ENCODE measurements at regions of chr4 and their contacts with region 1.

Region 1: GRCh38 chr4:78056265-78057129 is 626 bp upstream of the FRAS1 start:
- DNase-seq: no peak
- ATAC-seq: peak; percentile 82
- H3K4me3 ChIP-seq: peak overlapping the region; percentile 63
- H3K27ac ChIP-seq: no peak overlapping the region
- H3K4me1 ChIP-seq: peaks cover 12% of the 10 kb centered on the region; the same call in 1 of the 2 replicates
- H3K27me3 ChIP-seq: peaks cover 0 to 35% of the 10 kb centered on the region in 2 experiments; a peak in 3 of 4 replicates
- CTCF ChIP-seq: no peak
- EP300 ChIP-seq: no peak
- POLR2A ChIP-seq: no peak
- RAD21 ChIP-seq: no peak

Region 2: DNA sequence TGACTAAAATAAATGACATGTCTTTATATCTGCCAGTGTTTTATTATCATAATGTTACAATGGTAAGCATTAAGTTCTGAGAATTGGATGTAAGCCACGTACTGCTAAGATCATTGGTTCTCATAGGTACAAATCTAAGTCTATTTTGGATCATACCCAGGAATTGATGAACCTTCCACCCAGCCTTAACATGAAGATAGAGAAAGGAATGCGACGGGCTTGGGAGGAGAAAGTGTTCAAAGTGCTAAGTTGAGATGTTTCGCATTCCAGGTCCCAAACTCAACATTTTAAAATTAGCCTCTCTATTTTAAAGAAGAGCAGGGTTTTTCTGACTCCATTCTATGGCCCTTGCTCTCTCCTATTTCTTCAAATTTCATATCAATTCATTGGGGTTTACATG is 54.2 kb before region 1 on chr4:
- CTCF ChIA-PET with region 1: no interaction called
- POLR2A ChIA-PET with region 1: no interaction called
- RAD21 ChIA-PET with region 1: no interaction called
- SMC1A ChIA-PET with region 1: no interaction called
- in situ Hi-C with region 1: no loop called
- intact Hi-C with region 1: no loop called
- DNase-seq: no peak
- ATAC-seq: no peak
- H3K4me3 ChIP-seq: no peak overlapping the region
- H3K27ac ChIP-seq: no peak overlapping the region
- H3K4me1 ChIP-seq: no peaks in the 10 kb centered on the region
- H3K27me3 ChIP-seq: no peaks in the 10 kb centered on the region; a peak in 1 of 4 replicates
- CTCF ChIP-seq: no peak
- EP300 ChIP-seq: no peak
- POLR2A ChIP-seq: no peak
- RAD21 ChIP-seq: no peak

Region 3: DNA sequence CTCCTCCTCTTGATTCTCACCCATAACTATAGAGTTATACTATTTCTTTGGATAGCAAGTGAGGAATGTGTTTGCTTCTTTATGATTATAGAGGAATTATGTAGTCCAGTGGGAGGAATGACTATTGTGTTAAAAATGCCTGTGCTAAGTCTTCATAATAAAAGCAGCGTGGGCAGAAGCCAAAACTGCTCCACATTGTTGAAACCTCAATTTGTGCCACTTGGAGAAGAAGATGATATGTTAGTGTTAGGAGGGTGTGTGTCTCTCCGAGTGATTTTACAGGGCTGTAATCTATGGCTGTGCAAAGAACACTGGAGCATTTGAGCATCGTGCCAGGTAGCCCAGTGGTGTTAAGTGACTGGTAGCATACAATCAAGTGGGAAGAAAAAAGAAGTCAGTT is 74.9 kb after region 1 on chr4:
- CTCF ChIA-PET with region 1: interaction called, 12 read pairs
- POLR2A ChIA-PET with region 1: no interaction called
- RAD21 ChIA-PET with region 1: interaction called, 11 read pairs
- SMC1A ChIA-PET with region 1: interaction called, 8 read pairs
- in situ Hi-C with region 1: no loop called
- intact Hi-C with region 1: no loop called
- DNase-seq: no peak
- ATAC-seq: no peak
- H3K4me3 ChIP-seq: no peak overlapping the region
- H3K27ac ChIP-seq: no peak overlapping the region
- H3K4me1 ChIP-seq: no peaks in the 10 kb centered on the region
- H3K27me3 ChIP-seq: no peaks in the 10 kb centered on the region; a peak in 1 of 4 replicates
- CTCF ChIP-seq: no peak
- EP300 ChIP-seq: no peak
- POLR2A ChIP-seq: no peak
- RAD21 ChIP-seq: no peak

Region 4: GRCh38 chr4:78186597-78187543 is 130.4 kb after region 1 on chr4:
- CTCF ChIA-PET with region 1: interaction called, 20 read pairs
- POLR2A ChIA-PET with region 1: interaction called, 4 read pairs
- RAD21 ChIA-PET with region 1: interaction called, 30 read pairs
- SMC1A ChIA-PET with region 1: interaction called, 19 read pairs
- in situ Hi-C with region 1: no loop called
- intact Hi-C with region 1: no loop called
- DNase-seq: no peak
- ATAC-seq: peak; percentile 78
- H3K4me3 ChIP-seq: no peak overlapping the region
- H3K27ac ChIP-seq: no peak overlapping the region
- H3K4me1 ChIP-seq: no peaks in the 10 kb centered on the region
- H3K27me3 ChIP-seq: no peaks in the 10 kb centered on the region
- CTCF ChIP-seq: no peak
- EP300 ChIP-seq: no peak
- POLR2A ChIP-seq: no peak
- RAD21 ChIP-seq: no peak

Region 5: DNA sequence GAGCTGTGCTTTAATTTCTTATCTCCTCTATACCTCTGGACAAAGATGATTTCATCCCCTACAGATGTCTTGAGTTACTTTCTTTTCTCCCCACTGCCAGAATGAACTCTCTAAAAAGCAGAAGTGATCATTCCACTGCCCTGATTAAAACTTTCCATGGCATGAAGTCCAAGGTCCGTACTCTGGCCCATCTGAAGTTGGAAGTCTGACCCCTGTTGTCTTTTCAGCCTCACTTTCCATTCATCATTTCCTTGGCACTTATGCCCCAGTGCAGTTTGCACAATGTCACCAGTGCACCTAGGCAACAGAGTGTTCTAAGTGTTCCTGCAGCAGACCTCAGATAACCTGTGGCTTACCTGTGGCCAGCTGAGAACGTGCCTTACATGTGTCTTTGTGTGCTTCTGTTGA is 243.1 kb after region 1 on chr4:
- CTCF ChIA-PET with region 1: interaction called, 15 read pairs
- POLR2A ChIA-PET with region 1: no interaction called
- RAD21 ChIA-PET with region 1: interaction called, 13 read pairs
- SMC1A ChIA-PET with region 1: interaction called, 30 read pairs
- in situ Hi-C with region 1: no loop called
- intact Hi-C with region 1: no loop called
- DNase-seq: peak; percentile 23
- ATAC-seq: peak; percentile 82
- H3K4me3 ChIP-seq: no peak overlapping the region
- H3K27ac ChIP-seq: no peak overlapping the region
- H3K4me1 ChIP-seq: peaks cover 8% of the 10 kb centered on the region; the same call in 1 of the 2 replicates
- H3K27me3 ChIP-seq: no peaks in the 10 kb centered on the region
- CTCF ChIP-seq: no peak
- EP300 ChIP-seq: peak in 1 of 2 experiments; percentile 54; a peak in 1 of 4 replicates
- POLR2A ChIP-seq: no peak
- RAD21 ChIP-seq: no peak

Region 6: DNA sequence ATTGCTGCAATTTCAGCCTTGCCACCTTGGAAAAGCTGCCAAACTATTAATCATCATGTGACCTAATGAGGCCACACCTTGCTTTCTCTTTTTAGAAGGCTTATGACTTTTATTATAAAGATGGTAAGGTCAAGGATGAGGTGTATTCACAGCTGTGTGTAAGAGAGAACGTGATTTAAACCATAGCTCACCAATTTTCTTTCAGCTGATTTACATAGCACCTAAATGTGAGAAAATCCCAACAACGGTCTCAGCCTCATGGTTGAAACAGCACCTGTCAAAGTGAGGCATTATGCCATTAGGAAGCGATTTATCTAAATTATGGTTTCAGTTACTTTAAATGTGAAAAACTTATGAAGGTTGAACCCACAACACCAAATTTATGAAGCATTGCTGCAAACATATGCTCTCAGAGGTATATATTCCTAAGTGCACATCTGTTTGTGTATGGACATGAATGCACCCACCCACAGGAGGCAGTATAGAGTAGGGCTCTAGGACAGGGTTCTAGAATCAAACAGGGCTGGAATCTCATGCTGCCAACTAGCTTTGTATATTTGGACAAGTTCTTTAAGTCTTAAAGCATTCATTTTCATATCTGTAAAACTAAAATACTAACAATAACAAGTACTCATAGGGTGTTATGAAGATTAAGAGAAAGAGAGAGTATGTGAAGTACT is 535.7 kb after region 1 on chr4:
- CTCF ChIA-PET with region 1: interaction called, 5 read pairs
- POLR2A ChIA-PET with region 1: no interaction called
- RAD21 ChIA-PET with region 1: interaction called, 23 read pairs
- SMC1A ChIA-PET with region 1: interaction called, 6 read pairs
- in situ Hi-C with region 1: no loop called
- intact Hi-C with region 1: loop called (anchors 10 kb)
- DNase-seq: no peak
- ATAC-seq: peak; percentile 70
- H3K4me3 ChIP-seq: no peak overlapping the region
- H3K27ac ChIP-seq: no peak overlapping the region
- H3K4me1 ChIP-seq: no peaks in the 10 kb centered on the region
- H3K27me3 ChIP-seq: no peaks in the 10 kb centered on the region
- CTCF ChIP-seq: peak; percentile 34 to 61 (median 55)
- EP300 ChIP-seq: peak in 1 of 2 experiments; percentile 77; a peak in 2 of 4 replicates
- POLR2A ChIP-seq: no peak
- RAD21 ChIP-seq: no peak; the same call in 1 of the 2 replicates

Measured in GM12878 (cell line).